ENCODE measurements at regions of chr17 and their contacts with region 1.

Region 1: GRCh38 chr17:3738562-3739295 is 15.0 kb downstream of the HASPIN start:
- DNase-seq: peak; percentile 93
- ATAC-seq: peak; percentile 87
- H3K4me3 Mint-ChIP-seq: no peak overlapping the region
- H3K27ac Mint-ChIP-seq: peak overlapping the region; percentile 26
- H3K4me1 Mint-ChIP-seq: peaks cover 33% of the 10 kb centered on the region
- H3K27me3 Mint-ChIP-seq: no peaks in the 10 kb centered on the region
- CTCF ChIP-seq: no peak

Region 2: DNA sequence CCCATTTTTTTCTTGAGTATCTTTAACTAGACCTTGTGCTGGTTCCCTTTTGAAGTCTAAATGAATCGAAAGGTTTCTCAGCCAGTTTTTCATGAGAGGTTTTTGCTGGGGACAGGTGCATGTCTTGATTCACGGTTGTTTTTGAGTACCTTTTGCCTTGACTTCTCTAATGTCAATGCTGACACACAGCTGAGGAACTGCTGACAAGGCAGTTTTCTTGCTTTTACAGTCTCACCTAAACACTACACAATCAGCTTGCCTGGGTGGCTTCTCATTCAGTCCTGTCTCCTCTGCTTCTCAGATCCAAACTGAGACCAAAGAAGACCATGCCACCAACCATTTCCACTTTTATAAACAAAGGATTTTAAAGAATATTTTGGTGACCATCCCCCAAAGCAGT is 320.5 kb before region 1 on chr17:
- CTCF ChIA-PET with region 1: no interaction called
- POLR2A ChIA-PET with region 1: no interaction called
- intact Hi-C with region 1: no loop called
- DNase-seq: no peak
- ATAC-seq: no peak
- H3K4me3 Mint-ChIP-seq: no peak overlapping the region
- H3K27ac Mint-ChIP-seq: no peak overlapping the region
- H3K4me1 Mint-ChIP-seq: no peaks in the 10 kb centered on the region
- H3K27me3 Mint-ChIP-seq: peaks cover 14% of the 10 kb centered on the region
- CTCF ChIP-seq: no peak

Region 3: DNA sequence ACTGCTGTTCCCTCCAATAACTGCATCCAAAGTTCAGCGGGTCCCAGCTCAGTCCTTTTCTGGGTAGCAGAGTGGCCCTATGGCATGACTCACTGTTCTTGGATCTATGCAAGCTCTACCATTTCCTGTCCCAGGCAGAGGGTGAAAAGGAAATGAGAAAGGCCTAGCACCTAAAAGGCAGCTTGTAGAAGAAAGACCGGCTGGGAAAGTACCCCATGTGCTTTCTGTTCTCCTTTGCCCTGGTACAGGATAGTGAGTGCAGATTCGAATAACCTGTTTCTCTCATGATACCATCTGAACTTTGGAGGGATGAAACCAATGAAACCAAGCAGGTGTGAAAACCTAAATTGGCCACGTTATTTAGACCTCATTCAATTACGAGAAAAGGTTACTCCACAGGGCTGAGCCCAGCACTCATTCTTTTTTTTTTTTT is 27.8 kb before region 1 on chr17:
- CTCF ChIA-PET with region 1: interaction called, 24 read pairs
- POLR2A ChIA-PET with region 1: interaction called, 8 read pairs
- intact Hi-C with region 1: no loop called
- DNase-seq: peak; percentile 89
- ATAC-seq: peak; percentile 96
- H3K4me3 Mint-ChIP-seq: peak overlapping the region; percentile 31
- H3K27ac Mint-ChIP-seq: peak overlapping the region; percentile 83
- H3K4me1 Mint-ChIP-seq: peaks cover 52% of the 10 kb centered on the region
- H3K27me3 Mint-ChIP-seq: no peaks in the 10 kb centered on the region
- CTCF ChIP-seq: no peak

Region 4: DNA sequence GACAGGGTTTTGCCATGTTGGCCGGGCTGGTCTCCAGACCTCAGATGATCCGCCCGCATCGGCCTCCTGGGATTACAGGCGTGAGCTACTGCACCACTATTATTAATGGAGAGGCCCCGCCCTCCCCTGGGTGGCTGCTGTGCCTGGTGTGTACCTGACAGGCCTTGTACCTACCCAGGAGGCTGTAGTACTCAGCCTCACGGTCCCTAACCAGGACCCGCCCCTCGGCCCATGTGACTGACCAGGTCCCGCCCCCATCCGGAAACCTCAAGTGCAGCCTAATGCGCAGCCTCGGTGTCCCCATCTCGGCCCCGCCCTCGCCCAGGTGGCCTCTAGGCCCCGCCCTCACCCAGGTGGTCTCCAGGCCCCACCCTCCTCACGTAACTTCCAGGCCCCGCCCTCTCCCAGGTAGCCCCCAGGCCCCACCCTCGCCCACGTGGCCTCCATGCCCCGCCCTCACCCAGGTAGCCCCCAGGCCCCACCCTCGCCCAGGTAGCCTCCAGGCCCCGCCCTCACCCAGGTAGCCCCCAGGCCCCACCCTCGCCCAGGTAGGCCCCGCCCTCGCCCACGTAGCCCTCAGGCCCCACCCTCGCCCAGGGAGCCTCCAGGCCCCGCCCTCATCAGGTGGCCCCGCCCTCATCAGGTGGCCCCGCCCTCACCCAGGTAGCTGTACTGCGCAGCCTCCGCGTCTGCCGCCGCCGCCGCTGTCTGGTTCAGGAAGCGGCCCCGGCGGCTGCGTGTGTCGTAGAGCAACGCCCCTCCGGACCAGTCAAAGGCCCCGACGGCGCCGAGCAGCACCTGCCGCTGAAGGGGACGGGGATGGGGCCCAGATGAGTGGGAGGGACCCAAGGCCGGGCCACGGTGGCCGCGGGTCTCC is 16.0 kb after region 1 on chr17:
- CTCF ChIA-PET with region 1: interaction called, 44 read pairs
- POLR2A ChIA-PET with region 1: interaction called, 17 read pairs
- intact Hi-C with region 1: no loop called
- DNase-seq: peak; percentile 87
- ATAC-seq: peak; percentile 94
- H3K4me3 Mint-ChIP-seq: no peak overlapping the region
- H3K27ac Mint-ChIP-seq: no peak overlapping the region
- H3K4me1 Mint-ChIP-seq: peaks cover 28% of the 10 kb centered on the region
- H3K27me3 Mint-ChIP-seq: no peaks in the 10 kb centered on the region
- CTCF ChIP-seq: no peak

Region 5: DNA sequence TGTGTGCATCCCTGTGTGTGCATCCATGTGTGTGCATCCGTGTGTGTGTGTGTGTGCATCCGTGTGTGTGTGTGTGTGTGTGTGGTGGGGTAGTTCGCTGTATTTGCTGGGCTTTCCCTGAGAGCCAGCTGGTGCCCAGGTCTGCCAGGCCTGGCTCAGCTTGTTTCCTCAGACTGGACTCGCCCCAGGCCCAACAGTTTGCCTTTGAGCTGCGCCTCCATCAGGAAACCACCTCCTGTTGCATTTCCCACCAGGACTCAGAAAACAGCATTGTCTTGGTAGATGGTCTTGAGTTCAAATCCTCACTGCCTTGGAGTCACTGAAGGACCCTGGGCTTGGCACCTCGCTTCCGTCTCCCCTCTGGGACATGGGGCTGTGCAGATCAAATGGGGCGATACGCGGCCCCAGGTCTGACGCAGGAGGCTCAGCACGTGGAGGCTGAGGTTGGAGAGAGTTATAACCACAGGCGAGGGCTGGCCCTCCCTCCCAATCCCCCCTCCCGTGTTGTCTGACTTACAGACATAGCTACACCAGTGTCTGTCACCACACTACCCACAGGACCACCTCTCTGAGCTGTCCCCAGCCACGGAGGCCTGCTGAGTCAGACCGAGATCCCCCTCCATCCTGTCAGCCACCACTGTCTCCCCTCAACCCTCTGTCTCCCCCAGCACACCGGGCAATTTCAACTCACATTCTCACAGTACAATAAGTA is 57.5 kb after region 1 on chr17:
- CTCF ChIA-PET with region 1: interaction called, 32 read pairs
- POLR2A ChIA-PET with region 1: interaction called, 5 read pairs
- intact Hi-C with region 1: no loop called
- DNase-seq: peak; percentile 99
- ATAC-seq: peak; percentile 76
- H3K4me3 Mint-ChIP-seq: peak overlapping the region; percentile 43
- H3K27ac Mint-ChIP-seq: peak overlapping the region; percentile 83
- H3K4me1 Mint-ChIP-seq: peaks cover 66% of the 10 kb centered on the region
- H3K27me3 Mint-ChIP-seq: no peaks in the 10 kb centered on the region
- CTCF ChIP-seq: no peak

Region 6: DNA sequence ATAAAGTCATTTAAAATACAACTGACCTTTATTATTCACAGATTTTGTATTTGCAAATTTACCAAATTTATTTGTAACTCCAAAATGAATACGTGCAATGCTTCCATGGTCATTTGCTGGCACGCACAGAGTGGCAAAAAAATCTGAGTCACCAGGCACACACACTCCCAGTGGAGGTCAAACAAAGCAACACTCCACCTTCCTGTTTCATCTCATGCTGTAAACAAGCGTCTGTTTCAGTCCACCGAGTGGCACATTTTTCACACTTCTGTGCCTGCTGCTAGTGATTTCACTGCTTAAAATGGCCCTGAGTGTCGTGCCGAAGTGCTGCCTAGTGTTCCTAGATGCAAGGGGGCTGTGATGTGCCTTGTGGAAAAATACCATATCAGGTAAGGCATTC is 80.1 kb after region 1 on chr17:
- CTCF ChIA-PET with region 1: interaction called, 43 read pairs
- POLR2A ChIA-PET with region 1: interaction called, 3 read pairs
- intact Hi-C with region 1: no loop called
- DNase-seq: no peak
- ATAC-seq: no peak
- H3K4me3 Mint-ChIP-seq: no peak overlapping the region
- H3K27ac Mint-ChIP-seq: no peak overlapping the region
- H3K4me1 Mint-ChIP-seq: peaks cover 2% of the 10 kb centered on the region
- H3K27me3 Mint-ChIP-seq: no peaks in the 10 kb centered on the region
- CTCF ChIP-seq: no peak

Region 7: GRCh38 chr17:3845621-3846441 is 107.1 kb after region 1 on chr17 and contains the start of gene NCBP3:
- CTCF ChIA-PET with region 1: interaction called, 101 read pairs
- POLR2A ChIA-PET with region 1: interaction called, 8 read pairs
- intact Hi-C with region 1: loop called (anchors 5 kb)
- DNase-seq: peak; percentile 90
- ATAC-seq: peak; percentile 94
- H3K4me3 Mint-ChIP-seq: peak within 1 kb of the TSS; percentile 96
- H3K27ac Mint-ChIP-seq: peak within 1 kb of the TSS; percentile 93
- H3K4me1 Mint-ChIP-seq: peaks cover 25% of the 10 kb centered on the region
- H3K27me3 Mint-ChIP-seq: peaks cover 2% of the 10 kb centered on the region
- CTCF ChIP-seq: peak; percentile 87
- total RNA-seq, gene NCBP3: 34.7 to 41.1 TPM

Region 8: DNA sequence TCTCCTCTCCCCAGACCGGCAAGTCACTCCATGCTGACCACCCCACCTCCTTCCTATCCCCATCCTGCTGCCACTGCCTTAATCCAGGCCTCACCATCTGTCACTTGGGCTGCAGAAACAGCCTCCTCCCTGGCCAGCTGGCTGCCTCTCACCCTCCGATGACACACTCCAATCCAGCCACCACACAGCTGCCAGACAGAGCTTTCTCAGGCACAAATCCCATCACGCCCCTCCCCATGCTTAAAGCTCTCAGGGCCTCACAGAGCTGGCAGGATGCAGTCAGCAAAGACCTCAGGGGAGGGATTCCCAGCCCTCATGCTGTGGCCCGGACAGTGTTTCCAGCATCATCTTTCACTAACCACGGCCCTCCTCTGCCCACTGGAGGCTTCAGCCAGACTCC is 140.5 kb after region 1 on chr17:
- CTCF ChIA-PET with region 1: no interaction called
- POLR2A ChIA-PET with region 1: no interaction called
- intact Hi-C with region 1: no loop called
- DNase-seq: no peak
- ATAC-seq: no peak
- H3K4me3 Mint-ChIP-seq: no peak overlapping the region
- H3K27ac Mint-ChIP-seq: no peak overlapping the region
- H3K4me1 Mint-ChIP-seq: no peaks in the 10 kb centered on the region
- H3K27me3 Mint-ChIP-seq: no peaks in the 10 kb centered on the region
- CTCF ChIP-seq: no peak

Region 9: DNA sequence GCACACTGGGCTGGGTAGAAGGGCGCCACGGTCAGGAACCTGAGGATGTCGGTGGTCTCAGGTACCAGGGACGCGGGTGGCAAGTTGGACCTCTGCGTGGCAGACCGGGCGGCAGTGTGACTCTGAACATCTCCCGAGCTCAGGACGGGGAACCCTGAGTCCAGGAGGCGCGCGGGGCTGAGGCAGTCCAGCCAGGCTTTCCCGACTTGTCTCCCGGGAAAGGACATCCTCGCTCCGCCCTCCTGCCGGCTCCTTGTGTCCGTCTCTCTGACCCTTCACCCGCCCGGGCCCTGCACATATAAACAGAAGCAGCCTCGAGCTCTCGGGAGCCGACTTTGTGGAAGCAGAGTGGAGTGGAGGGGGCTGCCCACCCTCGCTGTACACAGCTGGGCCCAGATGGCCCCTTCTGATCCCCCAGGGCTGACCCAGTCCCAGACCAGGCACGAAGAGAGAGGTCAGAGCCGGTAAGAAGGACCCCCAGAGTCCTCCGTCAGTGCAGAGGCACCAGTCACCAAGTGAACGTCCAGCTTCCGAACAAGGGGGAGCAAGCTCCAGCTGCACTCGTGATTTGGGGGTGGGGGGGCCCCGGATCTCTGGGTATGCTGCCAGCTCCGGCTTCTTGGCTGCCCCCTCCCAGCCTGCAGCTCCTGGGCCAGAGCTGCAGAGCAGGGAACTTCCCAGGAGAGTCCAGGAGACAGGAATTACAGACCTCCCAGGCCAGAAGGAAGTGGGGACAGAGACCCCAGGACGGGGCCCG is 186.0 kb after region 1 on chr17:
- CTCF ChIA-PET with region 1: no interaction called
- POLR2A ChIA-PET with region 1: no interaction called
- intact Hi-C with region 1: no loop called
- DNase-seq: no peak
- ATAC-seq: no peak
- H3K4me3 Mint-ChIP-seq: no peak overlapping the region
- H3K27ac Mint-ChIP-seq: no peak overlapping the region
- H3K4me1 Mint-ChIP-seq: no peaks in the 10 kb centered on the region
- H3K27me3 Mint-ChIP-seq: no peaks in the 10 kb centered on the region
- CTCF ChIP-seq: no peak

Measured in activated CD8-positive, alpha-beta T cell treated with anti-CD3 and anti-CD28 coated beads for 36 hours (primary cell).